MCF 10A (cell line): ENCODE measurements at regions of chr17 and their contacts with region 1.

Region 1: DNA sequence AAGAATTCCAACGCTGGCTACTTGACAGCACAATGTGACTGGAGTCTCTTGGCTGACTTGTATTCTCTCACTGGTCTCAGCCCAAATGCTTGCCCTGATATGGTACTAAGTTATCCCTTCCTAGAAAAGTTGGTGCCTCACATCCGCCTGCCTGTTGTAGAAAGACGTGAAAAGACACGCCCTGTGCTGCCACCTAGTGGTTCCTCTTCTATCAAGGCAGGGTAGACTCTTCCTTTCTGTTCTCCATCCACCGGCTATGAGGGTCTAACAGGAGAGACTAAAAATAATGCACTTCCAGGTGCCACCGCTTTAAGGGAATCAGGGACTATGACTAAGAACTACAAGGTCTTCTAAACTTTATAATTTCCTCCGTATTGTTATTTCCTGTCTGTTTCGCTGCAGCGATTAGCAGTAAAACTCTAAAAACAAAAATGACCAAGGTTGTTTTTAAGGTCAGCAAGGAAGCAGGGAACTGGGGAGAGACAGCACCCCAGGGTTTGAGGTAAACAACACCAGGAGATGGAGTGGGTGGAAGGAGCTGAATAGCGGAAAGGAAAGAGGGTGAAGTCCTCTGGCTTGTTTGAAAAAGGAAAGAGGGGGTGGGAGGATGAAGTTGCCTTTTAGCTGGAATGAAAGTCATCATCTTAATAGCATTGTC is 109.5 kb downstream of the YPEL2 start:
- DNase-seq: peak; percentile 89
- H3K4me3 Mint-ChIP-seq: no peak overlapping the region
- H3K27ac Mint-ChIP-seq: peak overlapping the region; percentile 89
- H3K4me1 Mint-ChIP-seq: peaks cover 8% of the 10 kb centered on the region
- H3K27me3 Mint-ChIP-seq: no peaks in the 10 kb centered on the region
- CTCF ChIP-seq: peak; percentile 68

Region 2: DNA sequence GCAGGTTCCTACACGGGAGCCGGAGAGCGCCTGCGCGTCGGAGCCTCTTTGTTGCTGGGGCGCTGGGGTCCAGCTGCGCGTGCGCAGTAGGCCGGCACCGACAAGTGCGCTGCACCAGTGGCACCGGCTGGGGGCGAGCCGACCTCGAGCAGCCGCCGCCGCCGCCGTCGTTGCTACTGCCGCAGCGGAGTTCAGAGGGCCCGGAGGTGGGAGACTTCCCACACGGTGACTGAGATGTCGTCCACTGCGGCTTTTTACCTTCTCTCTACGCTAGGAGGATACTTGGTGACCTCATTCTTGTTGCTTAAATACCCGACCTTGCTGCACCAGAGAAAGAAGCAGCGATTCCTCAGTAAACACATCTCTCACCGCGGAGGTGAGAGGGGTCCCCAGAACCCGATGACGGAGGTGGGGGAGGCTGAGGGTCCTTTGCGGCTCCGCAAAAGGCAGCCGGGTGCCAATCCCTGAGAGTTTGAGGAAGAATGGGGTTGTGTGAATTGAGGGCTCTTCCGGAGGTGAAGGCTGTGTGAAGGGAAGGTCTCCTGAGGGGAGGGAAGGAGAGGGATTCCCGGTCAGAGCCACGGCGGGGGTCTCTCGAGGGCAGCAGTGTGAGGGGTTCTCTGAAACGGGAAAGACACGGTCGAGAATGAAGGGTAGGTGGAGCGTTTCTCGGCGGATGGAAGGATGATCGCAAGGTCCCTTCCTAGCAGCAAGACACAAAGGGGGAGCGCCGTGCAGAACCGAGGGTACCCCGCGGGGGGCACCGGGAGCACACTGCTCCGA is 220.3 kb before region 1 on chr17 and contains the start of gene GDPD1:
- CTCF ChIA-PET with region 1: interaction called, 3 read pairs
- POLR2A ChIA-PET with region 1: interaction called, 3 read pairs
- intact Hi-C with region 1: loop called (anchors 2 kb)
- DNase-seq: peak; percentile 91
- H3K4me3 Mint-ChIP-seq: peak within 1 kb of the TSS; percentile 94
- H3K27ac Mint-ChIP-seq: peak within 1 kb of the TSS; percentile 52
- H3K4me1 Mint-ChIP-seq: peaks cover 5% of the 10 kb centered on the region
- H3K27me3 Mint-ChIP-seq: no peaks in the 10 kb centered on the region
- CTCF ChIP-seq: peak; percentile 61
- total RNA-seq, gene GDPD1: 2.2 and 2.9 TPM in 2 replicates

Region 3: DNA sequence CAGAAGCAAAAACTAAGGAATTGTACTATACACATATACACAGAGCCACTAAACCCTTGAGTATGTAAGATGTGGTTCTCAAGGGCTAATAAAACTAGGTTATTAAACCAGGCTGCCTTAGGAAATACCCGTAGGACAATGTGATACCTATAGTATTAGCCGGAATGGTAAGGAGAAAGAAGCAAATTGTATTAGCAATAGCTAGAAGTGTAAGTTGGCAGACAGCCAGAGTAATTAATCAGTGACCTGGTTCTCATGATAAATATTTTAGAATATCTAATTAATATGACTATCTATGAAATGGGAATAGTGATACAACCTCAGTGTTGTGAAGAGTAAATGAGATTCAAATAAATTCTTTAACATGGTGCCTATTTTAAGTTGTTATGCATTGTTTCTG is 202.0 kb before region 1 on chr17:
- CTCF ChIA-PET with region 1: no interaction called
- POLR2A ChIA-PET with region 1: no interaction called
- intact Hi-C with region 1: no loop called
- DNase-seq: no peak
- H3K4me3 Mint-ChIP-seq: no peak overlapping the region
- H3K27ac Mint-ChIP-seq: no peak overlapping the region
- H3K4me1 Mint-ChIP-seq: no peaks in the 10 kb centered on the region
- H3K27me3 Mint-ChIP-seq: no peaks in the 10 kb centered on the region
- CTCF ChIP-seq: no peak

Region 4: GRCh38 chr17:59331129-59331928 is 109.6 kb before region 1 on chr17 and contains the start of gene YPEL2:
- CTCF ChIA-PET with region 1: interaction called, 28 read pairs
- POLR2A ChIA-PET with region 1: interaction called, 14 read pairs
- intact Hi-C with region 1: loop called (anchors 1 kb)
- DNase-seq: peak; percentile 86
- H3K4me3 Mint-ChIP-seq: peak within 1 kb of the TSS; percentile 74
- H3K27ac Mint-ChIP-seq: no peak within 1 kb of the TSS
- H3K4me1 Mint-ChIP-seq: peaks cover 21% of the 10 kb centered on the region
- H3K27me3 Mint-ChIP-seq: no peaks in the 10 kb centered on the region
- CTCF ChIP-seq: no peak
- total RNA-seq, gene YPEL2: 1.9 and 2.1 TPM in 2 replicates

Region 5: DNA sequence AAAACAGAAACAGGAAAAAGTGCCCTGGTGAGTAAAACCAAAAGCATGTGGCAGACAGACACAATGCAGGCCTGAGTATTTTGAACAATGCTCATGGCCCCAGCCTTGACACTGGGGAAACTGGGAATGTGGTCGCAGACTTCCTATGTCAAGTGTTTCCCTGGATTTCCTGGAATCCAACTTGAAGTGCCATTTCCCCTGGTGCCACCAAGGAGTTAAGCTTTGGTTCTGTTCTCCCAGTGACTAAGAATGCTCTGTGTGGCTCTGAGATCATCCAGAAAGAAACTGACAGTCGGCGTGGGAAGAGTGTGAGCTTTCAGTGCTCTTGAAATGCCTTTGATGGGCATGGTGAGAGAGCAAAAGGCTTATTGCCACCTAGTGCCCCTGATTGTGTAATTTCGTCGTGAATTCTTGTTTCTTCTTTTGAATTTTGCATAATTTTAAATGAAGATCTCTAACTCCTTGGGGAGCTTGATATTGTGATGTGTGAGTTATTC is 13.4 kb before region 1 on chr17:
- CTCF ChIA-PET with region 1: interaction called, 13 read pairs
- POLR2A ChIA-PET with region 1: interaction called, 7 read pairs
- intact Hi-C with region 1: no loop called
- DNase-seq: peak; percentile 51
- H3K4me3 Mint-ChIP-seq: no peak overlapping the region
- H3K27ac Mint-ChIP-seq: no peak overlapping the region
- H3K4me1 Mint-ChIP-seq: peaks cover 14% of the 10 kb centered on the region
- H3K27me3 Mint-ChIP-seq: no peaks in the 10 kb centered on the region
- CTCF ChIP-seq: no peak

Region 6: GRCh38 chr17:59451706-59452105 is 10.8 kb after region 1 on chr17:
- CTCF ChIA-PET with region 1: interaction called, 21 read pairs
- POLR2A ChIA-PET with region 1: interaction called, 4 read pairs
- intact Hi-C with region 1: no loop called
- DNase-seq: peak; percentile 58
- H3K4me3 Mint-ChIP-seq: no peak overlapping the region
- H3K27ac Mint-ChIP-seq: peak overlapping the region; percentile 47
- H3K4me1 Mint-ChIP-seq: peaks cover 6% of the 10 kb centered on the region
- H3K27me3 Mint-ChIP-seq: no peaks in the 10 kb centered on the region
- CTCF ChIP-seq: no peak

Region 7: DNA sequence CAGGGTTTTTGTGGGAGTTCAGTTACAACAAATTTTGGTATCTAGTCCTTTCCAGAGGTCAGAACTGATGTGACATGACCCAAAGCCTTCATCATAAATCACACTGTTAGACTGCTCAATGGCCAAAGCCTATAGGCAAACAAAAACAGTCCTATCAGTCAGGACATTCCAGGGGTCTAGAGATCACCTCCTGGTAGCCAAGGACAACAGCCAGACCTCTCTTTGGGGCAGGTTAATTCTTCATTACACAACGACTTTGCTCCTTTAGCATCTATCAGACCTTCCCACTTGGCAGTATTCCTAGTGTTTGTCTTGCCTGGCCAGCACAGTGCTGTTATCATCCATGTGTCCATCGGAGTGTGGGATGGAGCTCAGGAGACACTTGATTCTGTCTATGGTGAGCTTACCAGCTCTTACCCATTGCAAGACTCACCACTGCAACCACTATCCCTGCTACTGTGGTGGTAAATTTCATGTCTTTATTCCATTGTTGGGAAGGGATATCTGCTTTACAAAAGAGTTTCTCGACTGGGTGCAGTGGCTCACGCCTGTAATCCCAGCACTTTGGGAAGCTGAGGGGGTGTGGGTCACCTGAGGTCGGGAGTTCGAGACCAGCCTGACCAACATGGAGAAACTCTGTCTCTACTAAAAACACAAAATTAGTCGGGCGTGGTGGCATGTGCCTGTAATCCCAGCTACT is 29.0 kb after region 1 on chr17:
- CTCF ChIA-PET with region 1: no interaction called
- POLR2A ChIA-PET with region 1: no interaction called
- intact Hi-C with region 1: no loop called
- DNase-seq: no peak
- H3K4me3 Mint-ChIP-seq: no peak overlapping the region
- H3K27ac Mint-ChIP-seq: no peak overlapping the region
- H3K4me1 Mint-ChIP-seq: no peaks in the 10 kb centered on the region
- H3K27me3 Mint-ChIP-seq: no peaks in the 10 kb centered on the region
- CTCF ChIP-seq: no peak